CD4-positive, alpha-beta memory T cell (primary cell): ENCODE measurements at regions of chr19 and their contacts with region 1.

Region 1: GRCh38 chr19:29263305-29264135 is 50.6 kb upstream of the UQCRFS1 start:
- DNase-seq: peak in 4 of 5 donors; percentile 27 to 38 (median 29)
- H3K4me3 ChIP-seq: no peak overlapping the region
- H3K4me3 Mint-ChIP-seq: no peak overlapping the region
- H3K27ac ChIP-seq: no peak overlapping the region
- H3K27ac Mint-ChIP-seq: no peak overlapping the region
- H3K4me1 ChIP-seq: no peaks in the 10 kb centered on the region
- H3K4me1 Mint-ChIP-seq: peaks cover 0 to 2% (median under 1%) of the 10 kb centered on the region in 4 donors
- H3K27me3 ChIP-seq: no peaks in the 10 kb centered on the region
- H3K27me3 Mint-ChIP-seq: peaks cover 8 to 21% of the 10 kb centered on the region in 2 donors

Region 2: GRCh38 chr19:28466107-28467045 is 797.1 kb before region 1 on chr19:
- CTCF ChIA-PET with region 1: no interaction called
- POLR2A ChIA-PET with region 1: no interaction called
- intact Hi-C with region 1: loop called (anchors 5 kb)
- DNase-seq: peak in 4 of 5 donors; percentile 14 to 28 (median 17)
- H3K4me3 ChIP-seq: no peak overlapping the region
- H3K4me3 Mint-ChIP-seq: no peak overlapping the region
- H3K27ac ChIP-seq: no peak overlapping the region
- H3K27ac Mint-ChIP-seq: no peak overlapping the region
- H3K4me1 ChIP-seq: no peaks in the 10 kb centered on the region
- H3K4me1 Mint-ChIP-seq: peaks cover 0 to 14% (median 2%) of the 10 kb centered on the region in 4 donors
- H3K27me3 ChIP-seq: no peaks in the 10 kb centered on the region
- H3K27me3 Mint-ChIP-seq: peaks cover 0 to 4% of the 10 kb centered on the region in 2 donors

Region 3: DNA sequence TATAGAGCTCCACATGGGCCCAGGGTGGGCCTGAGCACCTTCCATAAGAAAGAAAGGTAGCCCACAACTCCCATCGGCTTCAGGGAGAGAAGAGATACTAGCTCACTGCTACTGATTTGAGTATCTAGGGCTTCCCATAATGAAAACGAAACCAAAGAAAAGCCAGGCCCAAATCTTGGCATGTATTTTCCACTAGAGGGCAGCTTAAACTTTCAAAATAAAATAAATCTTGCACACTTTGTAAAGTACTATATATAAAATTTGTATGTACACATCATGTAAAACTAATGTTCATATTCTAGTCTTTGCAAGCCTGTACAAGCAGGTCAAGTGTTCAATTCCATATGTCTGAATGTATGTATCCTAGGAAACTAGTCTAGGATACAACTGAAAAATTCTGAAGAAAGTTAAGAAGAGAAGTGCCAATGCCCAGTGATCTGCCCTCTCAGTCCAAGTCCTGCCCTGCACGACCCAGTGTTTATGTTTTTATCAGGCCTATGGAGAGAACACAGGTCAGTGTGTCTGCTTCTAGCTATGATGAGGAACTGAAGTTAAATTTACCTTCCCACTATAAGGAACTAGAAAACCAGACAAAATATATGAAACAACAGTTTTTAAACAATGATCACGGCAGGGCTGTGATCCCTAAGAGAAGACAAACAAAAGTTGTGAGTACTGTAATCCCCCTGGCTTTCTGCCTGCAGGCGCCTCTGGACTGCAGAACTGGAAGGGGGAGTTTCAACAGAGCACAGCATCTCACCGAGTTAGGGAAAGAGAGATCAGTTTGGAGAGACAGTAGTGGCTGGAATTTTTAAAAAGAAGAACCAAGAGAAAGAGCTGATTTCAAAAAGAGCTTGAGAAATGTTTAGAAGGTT is 526.3 kb before region 1 on chr19:
- CTCF ChIA-PET with region 1: interaction called, 17 read pairs
- POLR2A ChIA-PET with region 1: no interaction called
- intact Hi-C with region 1: no loop called
- DNase-seq: peak in 3 of 5 donors; percentile 7 to 26 (median 21)
- H3K4me3 ChIP-seq: no peak overlapping the region
- H3K4me3 Mint-ChIP-seq: peak overlapping the region in 6 of 8 donors; percentile 11 to 52 (median 32)
- H3K27ac ChIP-seq: no peak overlapping the region
- H3K27ac Mint-ChIP-seq: peak overlapping the region in 6 of 7 donors; percentile 16 to 84 (median 54)
- H3K4me1 ChIP-seq: peaks cover 7% of the 10 kb centered on the region
- H3K4me1 Mint-ChIP-seq: peaks cover 2 to 5% (median 4%) of the 10 kb centered on the region in 4 donors
- H3K27me3 ChIP-seq: no peaks in the 10 kb centered on the region
- H3K27me3 Mint-ChIP-seq: no peaks in the 10 kb centered on the region